Activated CD4-positive, alpha-beta T cell treated with anti-CD3 and anti-CD28 coated beads, Interleukin-2, amount 10 ng/mL, durations not matched to agents 24 days and 14 days (primary cell): ENCODE measurements at regions of chr1 and their contacts with region 1.

Region 1: DNA sequence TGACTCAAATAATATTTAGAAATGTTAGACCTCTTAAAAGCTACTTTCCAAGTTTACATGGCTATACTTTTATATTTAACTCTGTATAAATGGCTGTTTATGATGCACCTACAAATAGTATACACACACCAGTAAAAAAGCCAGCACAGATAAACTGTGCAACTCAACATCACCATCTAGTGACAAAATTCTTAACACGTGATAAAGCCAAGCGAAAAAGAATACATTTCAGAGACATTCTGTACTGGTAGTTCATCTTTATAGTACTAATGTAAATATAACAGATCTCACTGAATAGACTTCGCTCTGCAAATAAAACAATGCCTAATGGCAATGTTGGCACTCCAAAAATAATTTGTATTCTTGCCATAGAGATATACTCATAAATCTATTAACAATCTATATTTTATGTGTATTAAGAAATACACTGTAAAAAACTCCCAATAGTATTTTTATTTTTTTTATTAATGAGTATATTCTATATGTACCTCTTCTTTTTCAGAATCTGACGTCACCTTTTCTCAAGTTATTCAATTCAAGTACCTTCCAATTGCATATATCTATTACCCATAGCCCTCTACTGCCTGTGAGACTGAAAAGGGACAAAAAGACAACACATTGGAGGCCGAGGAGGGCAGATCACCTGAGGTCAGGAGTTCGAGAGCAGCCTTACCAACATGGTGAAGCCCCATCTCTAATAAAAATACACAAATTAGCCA is 100.2 kb downstream of the DPYD start:
- DNase-seq: no peak
- H3K4me3 Mint-ChIP-seq: no peak overlapping the region
- H3K27ac Mint-ChIP-seq: no peak overlapping the region
- H3K4me1 Mint-ChIP-seq: no peaks in the 10 kb centered on the region
- H3K27me3 Mint-ChIP-seq: no peaks in the 10 kb centered on the region

Region 2: DNA sequence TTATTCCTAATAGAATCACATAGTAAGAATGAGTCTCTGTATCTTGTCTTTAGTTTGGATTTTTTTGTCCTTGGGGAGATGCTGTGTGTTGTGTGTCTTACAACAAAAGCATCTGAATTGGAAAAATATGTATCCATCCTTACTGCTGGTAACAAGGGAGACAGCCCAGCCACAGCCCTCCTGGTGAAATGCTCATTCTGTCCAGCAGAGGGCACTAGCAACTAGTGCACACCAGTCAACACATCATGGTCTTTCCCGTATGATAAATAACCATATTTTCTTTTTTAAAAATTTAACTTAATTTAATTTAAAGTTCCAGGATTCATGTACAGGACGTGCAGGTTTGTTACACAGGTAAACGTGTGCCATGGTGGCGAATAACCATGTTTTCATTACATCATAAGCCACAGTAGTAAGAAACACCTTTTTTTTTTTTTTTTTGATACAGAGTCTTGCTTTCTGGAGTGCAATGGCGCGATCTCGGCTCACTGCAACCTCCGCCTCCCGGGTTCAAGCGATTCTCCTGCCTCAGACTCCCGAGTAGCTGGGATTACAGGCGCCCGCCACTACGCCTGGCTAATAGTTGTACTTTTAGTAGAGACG is 854.0 kb before region 1 on chr1:
- intact Hi-C with region 1: loop called (anchors 5 kb)
- DNase-seq: peak; percentile 90
- H3K4me3 Mint-ChIP-seq: no peak overlapping the region
- H3K27ac Mint-ChIP-seq: no peak overlapping the region
- H3K4me1 Mint-ChIP-seq: no peaks in the 10 kb centered on the region
- H3K27me3 Mint-ChIP-seq: peaks cover 3% of the 10 kb centered on the region

Region 3: GRCh38 chr1:97137862-97138514 is 682.6 kb before region 1 on chr1:
- intact Hi-C with region 1: loop called (anchors 5 kb)
- DNase-seq: peak; percentile 71
- H3K4me3 Mint-ChIP-seq: no peak overlapping the region
- H3K27ac Mint-ChIP-seq: no peak overlapping the region
- H3K4me1 Mint-ChIP-seq: peaks cover 3% of the 10 kb centered on the region
- H3K27me3 Mint-ChIP-seq: no peaks in the 10 kb centered on the region

Region 4: DNA sequence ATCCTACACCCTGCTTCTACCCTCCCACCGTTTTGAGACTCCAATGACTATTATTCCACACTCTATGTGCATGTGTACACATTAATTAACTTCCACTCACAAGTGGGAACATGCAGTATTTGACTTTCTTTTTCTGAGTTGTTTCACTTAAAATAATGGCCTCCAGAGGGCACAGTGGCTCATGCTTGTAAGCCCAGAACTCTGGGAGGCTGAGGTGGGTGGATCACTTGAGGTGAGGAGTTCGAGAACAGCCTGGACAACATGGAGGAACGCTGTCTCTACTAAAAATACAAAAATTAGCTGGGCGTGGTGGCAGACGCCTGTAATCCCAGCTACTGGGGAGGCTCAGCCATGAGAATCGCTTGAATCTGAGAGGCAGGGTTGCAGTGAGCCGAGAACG is 634.2 kb before region 1 on chr1:
- intact Hi-C with region 1: loop called (anchors 10 kb)
- DNase-seq: peak; percentile 58
- H3K4me3 Mint-ChIP-seq: no peak overlapping the region
- H3K27ac Mint-ChIP-seq: no peak overlapping the region
- H3K4me1 Mint-ChIP-seq: no peaks in the 10 kb centered on the region
- H3K27me3 Mint-ChIP-seq: no peaks in the 10 kb centered on the region

Region 5: DNA sequence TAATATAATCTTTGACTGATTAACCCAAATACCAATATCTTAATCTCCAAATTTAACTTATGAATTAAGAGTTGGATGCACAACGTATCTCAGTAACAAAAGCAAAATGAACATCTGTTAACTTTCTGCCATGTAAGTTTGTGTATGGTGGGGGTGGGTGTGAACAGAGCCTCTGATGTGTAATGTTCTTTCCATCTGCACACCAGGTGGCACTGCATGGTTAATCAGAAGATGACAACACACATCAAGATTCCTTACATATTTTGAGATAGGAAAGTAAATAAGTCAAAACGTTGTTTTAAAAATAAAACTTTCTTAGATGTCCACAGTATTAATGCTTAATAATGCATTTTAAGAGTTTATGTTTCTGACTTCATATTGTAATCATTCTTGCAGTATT is 151.7 kb before region 1 on chr1:
- intact Hi-C with region 1: loop called (anchors 1 kb)
- DNase-seq: no peak
- H3K4me3 Mint-ChIP-seq: no peak overlapping the region
- H3K27ac Mint-ChIP-seq: no peak overlapping the region
- H3K4me1 Mint-ChIP-seq: no peaks in the 10 kb centered on the region
- H3K27me3 Mint-ChIP-seq: no peaks in the 10 kb centered on the region

Region 6: DNA sequence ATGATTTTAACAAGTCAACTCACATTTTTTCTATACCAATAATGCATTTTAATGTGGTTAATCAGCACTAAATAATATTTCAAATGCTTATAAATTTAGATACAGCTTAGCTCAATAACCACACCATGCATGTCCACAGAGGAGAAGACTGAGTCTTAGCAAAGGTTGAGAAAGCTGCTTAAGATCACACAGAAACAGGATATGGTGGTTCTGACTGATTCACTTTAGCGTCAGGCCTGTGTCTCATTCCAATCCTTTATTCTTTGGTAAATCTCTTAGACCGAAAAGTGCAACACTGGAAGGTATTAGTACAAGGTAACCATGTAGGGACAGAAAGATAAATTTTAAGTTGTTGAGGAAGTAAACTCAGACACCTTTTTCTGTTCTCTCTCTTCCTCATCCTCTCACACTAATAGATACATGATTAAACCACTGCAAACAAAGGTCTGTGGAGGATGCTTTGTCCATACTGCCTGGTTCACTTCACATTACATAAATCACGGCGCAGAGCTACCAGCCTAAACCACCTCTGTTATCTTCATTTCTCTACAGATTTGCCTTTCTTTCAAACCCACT is 38.8 kb before region 1 on chr1:
- intact Hi-C with region 1: no loop called
- DNase-seq: no peak
- H3K4me3 Mint-ChIP-seq: no peak overlapping the region
- H3K27ac Mint-ChIP-seq: no peak overlapping the region
- H3K4me1 Mint-ChIP-seq: peaks cover 6% of the 10 kb centered on the region
- H3K27me3 Mint-ChIP-seq: no peaks in the 10 kb centered on the region